Activated T-helper 2 cell treated with anti-CD3 and anti-CD28 coated beads, Interferon-gamma antibody, Interleukin-2, Interleukin-4, amounts not matched to agents 10 μg/mL and 5 μg/mL and 100 μg/mL, durations not matched to agents 14 hours and 24 hours and 36 hours (primary cell): ENCODE measurements at regions of chr12 and their contacts with region 1.

Region 1: DNA sequence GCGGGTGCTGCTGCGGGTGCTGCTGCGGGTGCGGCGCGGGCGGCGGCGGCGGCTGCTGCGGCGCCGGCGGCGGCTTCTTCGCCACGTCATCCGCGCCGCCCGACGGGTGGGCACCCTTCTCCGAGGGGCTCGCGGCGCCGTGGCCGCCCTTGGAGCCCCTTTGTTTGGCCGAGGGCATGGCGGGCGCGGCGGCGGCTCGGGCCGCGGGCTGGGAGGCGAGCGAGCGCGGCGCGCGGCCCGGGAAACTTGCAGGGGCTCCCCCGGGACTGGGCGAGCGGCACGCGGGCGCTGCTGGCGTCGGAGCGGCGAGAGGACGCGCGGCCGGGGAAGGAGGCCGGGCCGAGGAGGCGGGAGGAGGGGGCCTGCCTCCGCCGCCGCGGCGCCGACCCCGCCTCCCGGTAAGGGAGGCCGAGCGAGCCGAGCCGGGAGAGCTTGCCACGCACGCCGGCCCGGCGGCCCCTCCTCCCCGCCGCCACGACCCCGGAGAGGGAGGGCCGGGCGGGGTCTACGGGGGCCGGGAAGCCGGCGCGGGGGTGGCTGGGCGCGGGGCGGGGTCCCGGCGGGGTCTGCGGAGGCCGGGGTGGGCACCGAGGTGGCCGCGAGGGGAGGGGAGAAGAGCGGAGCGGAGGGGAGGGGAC is at the start of gene CKAP4:
- DNase-seq: peak; percentile 24
- H3K4me3 Mint-ChIP-seq: peak within 1 kb of the TSS; percentile 68
- H3K27ac Mint-ChIP-seq: peak within 1 kb of the TSS; percentile 67
- H3K4me1 Mint-ChIP-seq: peaks cover 9% of the 10 kb centered on the region
- H3K27me3 Mint-ChIP-seq: peaks cover 22% of the 10 kb centered on the region
- total RNA-seq, gene CKAP4: 5.0 and 5.7 TPM in 2 replicates

Region 2: GRCh38 chr12:106269150-106269771 is 21.5 kb after region 1 on chr12:
- intact Hi-C with region 1: loop called (anchors 1 kb)
- DNase-seq: no peak
- H3K4me3 Mint-ChIP-seq: no peak overlapping the region
- H3K27ac Mint-ChIP-seq: no peak overlapping the region
- H3K4me1 Mint-ChIP-seq: peaks cover 38% of the 10 kb centered on the region
- H3K27me3 Mint-ChIP-seq: peaks cover 23% of the 10 kb centered on the region

Region 3: DNA sequence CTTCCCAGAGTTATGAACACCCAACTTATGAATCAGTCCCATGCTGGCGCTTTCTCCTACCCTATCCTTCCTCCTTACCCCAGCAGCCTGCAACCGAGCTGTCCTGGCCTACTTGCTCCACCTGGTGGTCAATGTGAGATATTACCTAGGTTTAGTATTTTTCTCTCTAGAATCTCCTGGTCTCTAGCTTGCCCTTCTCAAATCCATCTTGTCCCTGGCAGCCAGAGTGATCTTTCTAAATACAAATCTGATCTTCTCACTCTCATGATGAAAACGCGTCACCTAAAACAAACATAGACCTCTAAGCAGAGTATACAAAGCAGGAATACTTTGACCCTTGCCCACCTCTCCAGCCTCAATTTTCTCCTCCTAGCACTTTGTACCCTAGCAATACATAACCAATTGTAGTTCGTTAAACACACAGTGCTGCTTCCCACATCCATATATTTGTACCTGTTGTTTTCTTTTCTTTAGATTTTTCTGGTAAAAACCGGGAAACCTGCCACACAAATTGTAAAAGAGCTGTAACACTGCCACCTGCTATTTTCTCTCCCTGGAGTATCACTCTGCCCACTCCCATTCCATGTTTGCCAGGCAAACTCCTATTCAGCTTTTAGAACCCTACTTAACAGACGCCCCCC is 34.8 kb after region 1 on chr12:
- intact Hi-C with region 1: loop called (anchors 2 kb)
- DNase-seq: peak; percentile 18
- H3K4me3 Mint-ChIP-seq: no peak overlapping the region
- H3K27ac Mint-ChIP-seq: no peak overlapping the region
- H3K4me1 Mint-ChIP-seq: peaks cover 10% of the 10 kb centered on the region
- H3K27me3 Mint-ChIP-seq: peaks cover 24% of the 10 kb centered on the region

Region 4: DNA sequence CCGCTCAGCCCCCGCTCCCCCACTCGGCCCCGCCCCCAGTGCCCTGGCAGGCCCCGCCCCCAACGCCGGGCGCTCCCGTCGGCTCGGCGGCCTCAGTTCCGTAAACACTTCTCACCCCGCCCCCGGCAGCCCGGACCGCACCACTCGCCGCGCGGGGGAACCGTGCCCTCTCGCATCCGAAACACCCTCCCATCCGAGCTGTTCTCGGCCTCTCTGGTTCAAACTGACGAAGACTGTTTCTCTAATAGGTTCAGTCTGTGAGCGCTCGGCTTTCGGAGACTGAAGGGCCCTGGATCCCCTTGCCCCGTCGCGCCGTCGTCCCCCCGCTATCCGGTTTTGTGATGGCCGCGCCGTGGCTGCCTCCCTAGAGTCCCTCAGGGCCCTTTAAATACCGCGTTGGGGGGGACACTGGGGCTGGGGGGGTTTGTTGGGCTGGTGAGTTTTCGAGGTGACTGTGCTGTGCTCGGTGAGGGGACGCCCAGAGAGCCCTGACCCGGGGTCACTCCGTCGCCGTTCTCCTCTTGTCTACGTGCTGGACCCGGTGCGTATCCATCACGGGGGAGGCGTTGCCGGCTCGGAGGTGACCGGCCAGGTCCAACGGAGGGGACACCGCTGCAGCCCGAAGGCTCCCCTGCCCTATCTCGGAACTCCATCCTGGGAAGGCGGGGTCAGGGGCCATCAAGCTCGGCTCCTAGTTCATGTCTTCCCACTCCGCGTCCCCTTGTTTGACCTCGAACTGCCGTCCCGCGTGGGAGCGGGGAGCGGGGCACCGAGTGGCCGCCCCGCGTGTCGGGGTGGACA is 54.8 kb after region 1 on chr12 and contains the start of gene TCP11L2:
- intact Hi-C with region 1: loop called (anchors 5 kb)
- DNase-seq: peak; percentile 83
- H3K4me3 Mint-ChIP-seq: peak within 1 kb of the TSS; percentile 94
- H3K27ac Mint-ChIP-seq: peak within 1 kb of the TSS; percentile 100
- H3K4me1 Mint-ChIP-seq: peaks cover 37% of the 10 kb centered on the region
- H3K27me3 Mint-ChIP-seq: no peaks in the 10 kb centered on the region
- total RNA-seq, gene TCP11L2: 4.8 and 5.1 TPM in 2 replicates